Motor neuron (in vitro differentiated cells): ENCODE measurements at regions of chr15 and their contacts with region 1.

Region 1: DNA sequence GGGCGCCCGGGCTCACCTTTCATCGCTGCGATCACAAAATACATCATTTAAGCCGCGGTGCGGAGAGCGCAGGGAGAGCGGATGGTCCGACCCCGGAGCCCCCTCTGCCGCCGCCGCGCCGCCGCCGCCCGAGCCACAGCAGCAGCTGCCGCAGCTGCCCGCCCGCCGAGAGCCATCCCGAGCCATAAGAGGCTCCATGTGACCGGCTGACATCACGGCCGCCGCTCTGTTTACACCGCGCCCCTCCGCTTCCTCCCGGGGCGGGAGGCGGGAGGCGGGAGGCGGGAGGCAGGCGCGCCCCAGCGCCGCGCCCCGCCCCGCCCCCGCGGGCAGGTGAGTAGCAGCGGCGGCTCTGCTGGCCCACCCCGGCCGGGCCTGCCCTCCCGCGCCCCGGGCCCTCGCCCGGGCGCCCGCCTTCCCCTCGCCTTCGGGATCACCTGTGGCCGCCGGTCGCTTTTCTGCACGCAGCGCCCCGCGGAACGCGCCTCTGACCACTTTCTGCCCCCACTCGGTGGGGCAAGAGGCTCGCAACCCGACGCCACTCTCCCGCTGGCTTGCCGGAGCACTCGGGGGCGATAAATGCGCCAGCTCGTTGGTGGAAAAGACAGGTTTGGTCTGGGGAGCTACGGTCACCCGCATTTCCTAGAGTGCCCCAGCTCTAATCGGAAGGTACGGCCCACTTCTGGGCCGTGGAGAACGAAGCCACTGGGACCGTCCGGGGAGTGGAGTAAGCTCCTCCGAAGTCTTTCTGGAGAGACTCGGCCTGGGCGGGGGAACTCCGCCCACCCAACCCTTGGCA is 113.6 kb upstream of the ICE2 start:
- ATAC-seq: peak; percentile 81 to 91 (median 88)
- H3K4me3 ChIP-seq: peak overlapping the region; percentile 44 to 99 (median 78)
- H3K27ac ChIP-seq: peak overlapping the region in 1 of 2 donors; percentile 70
- H3K4me1 ChIP-seq: peaks cover 7 to 12% of the 10 kb centered on the region in 2 donors

Region 2: DNA sequence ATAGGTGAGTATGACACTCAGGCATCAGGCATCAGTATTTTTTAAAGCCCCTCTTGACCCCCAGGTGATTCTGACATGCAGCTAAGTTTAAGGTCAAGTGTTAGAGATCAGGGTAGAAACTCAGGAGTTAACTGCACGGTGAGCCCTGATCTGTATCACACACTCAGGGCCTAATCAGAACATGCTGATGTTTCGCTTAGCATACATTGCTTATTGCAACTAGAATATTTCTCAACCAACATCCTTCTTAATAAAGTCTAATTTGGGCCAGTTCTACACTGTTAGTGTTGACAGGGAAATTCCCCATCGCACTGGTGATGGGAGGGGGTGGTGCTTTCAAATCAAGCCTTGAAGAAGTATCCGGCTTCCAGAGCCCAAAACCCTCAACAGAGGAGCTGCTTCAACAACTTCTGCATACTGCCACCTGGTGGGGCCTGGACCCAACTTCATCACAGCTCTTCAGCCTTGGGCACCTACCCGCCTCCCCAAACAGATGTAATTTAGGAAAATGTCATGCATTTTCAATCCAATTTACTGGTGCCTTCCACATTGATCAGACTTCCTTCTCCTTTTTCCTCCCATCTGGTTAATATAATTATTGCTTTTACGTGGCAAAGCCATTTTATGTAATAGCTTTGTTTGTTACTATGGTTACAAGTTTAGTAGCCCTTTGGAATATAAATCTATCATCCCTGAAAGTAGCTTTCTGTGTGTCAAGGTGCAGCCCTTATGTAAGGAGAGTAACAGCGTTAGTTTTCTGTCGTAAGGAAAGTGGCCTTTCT is 324.3 kb after region 1 on chr15:
- in situ Hi-C with region 1: loop called in 8 of 9 experiments (anchors 10 to 25 kb)
- ATAC-seq: peak; percentile 78 to 97 (median 88)
- H3K4me3 ChIP-seq: no peak overlapping the region
- H3K27ac ChIP-seq: no peak overlapping the region
- H3K4me1 ChIP-seq: peaks cover 18 to 19% of the 10 kb centered on the region in 2 donors

Region 3: DNA sequence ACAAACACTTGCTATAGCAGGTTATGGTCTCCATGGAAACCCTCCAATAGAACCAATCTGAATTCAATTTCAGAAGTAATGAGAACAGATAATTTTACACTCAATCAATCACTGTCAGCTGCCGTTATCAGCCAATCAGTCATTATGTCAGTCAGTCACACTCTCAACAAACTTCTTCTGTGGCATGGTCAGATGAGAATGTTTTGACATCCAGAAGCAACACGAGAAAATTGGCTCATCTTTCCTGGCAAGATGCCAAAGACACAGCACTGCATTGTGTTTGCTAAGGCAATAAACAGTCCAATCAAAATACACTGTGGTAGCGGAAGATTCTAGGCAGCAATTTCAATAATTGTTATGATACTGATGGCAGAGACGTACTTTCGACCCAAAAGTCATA is 445.8 kb after region 1 on chr15:
- in situ Hi-C with region 1: loop called in 1 of 9 experiments (anchors 25 kb)
- ATAC-seq: no peak
- H3K4me3 ChIP-seq: no peak overlapping the region
- H3K27ac ChIP-seq: no peak overlapping the region
- H3K4me1 ChIP-seq: peaks cover 12 to 27% of the 10 kb centered on the region in 2 donors

Region 4: GRCh38 chr15:61051569-61052031 is 459.0 kb after region 1 on chr15:
- in situ Hi-C with region 1: loop called in 4 of 9 experiments (anchors 25 kb)
- ATAC-seq: peak; percentile 85 to 100 (median 94)
- H3K4me3 ChIP-seq: no peak overlapping the region
- H3K27ac ChIP-seq: no peak overlapping the region
- H3K4me1 ChIP-seq: peaks cover 5 to 21% of the 10 kb centered on the region in 2 donors

Region 5: GRCh38 chr15:61530779-61531178 is 938.2 kb after region 1 on chr15:
- in situ Hi-C with region 1: no loop called
- ATAC-seq: peak in 1 of 8 experiments; percentile 36
- H3K4me3 ChIP-seq: no peak overlapping the region
- H3K27ac ChIP-seq: no peak overlapping the region
- H3K4me1 ChIP-seq: peaks cover 7 to 17% of the 10 kb centered on the region in 2 donors